Left cardiac atrium (tissue), 4 donors: ENCODE measurements at regions of chr5 and their contacts with region 1.

Region 1: DNA sequence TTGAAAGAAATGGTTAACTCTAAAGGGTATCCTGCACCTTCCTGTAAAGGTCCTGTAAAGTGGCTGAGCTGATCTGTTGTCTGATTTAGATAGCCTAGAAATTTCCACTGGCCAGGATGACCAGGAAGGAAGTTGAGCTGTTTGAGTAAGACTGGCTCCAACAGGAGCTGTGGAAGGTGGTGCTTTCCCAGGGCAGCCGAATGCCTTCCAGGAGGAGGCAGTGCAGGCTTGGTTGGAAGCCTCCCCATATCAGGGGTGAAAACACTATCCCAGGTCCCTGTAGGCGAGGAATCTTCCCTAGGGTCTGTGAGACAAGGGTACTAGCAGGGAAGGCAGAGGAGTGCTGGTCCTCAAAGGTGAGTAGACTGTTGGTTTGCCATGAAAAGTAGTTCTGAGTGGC is 98.4 kb downstream of the LIX1 start:
- DNase-seq: peak; percentile 30
- ATAC-seq: peak; percentile 77 to 80

Region 2: DNA sequence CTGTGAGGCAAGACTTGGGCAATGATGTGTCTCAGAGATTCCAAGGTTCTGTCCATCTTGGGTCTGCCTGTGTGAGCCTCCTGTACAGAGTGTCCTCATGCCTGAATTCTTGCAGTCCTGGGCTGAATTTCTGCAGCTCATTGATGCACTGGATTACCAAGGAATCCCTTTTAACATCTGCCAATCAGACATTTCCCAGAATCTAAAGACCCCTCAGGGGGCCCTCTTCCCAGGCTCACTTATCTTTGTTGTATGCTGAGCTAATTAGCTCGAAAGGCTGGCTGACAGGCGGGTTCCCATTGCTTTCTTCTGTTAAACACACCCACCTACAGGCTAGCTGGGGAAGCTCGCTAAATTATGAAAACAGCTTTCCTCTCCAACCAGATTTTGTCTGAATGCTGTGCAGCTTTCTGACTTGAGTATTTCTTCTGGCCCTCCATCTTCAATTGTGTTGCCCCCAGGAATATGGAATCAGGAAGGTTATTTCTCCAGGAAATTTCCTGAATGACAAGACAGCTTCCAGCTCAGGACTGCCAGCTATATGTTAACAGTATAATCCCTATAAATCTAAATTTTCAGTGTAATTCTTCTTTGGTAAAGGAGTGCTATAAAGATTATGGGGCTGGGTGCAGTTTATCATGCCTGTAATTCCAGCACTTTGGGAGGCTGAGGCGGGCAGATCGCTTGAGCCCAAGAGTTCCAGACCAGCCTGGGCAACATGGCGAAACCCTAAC is 98.6 kb after region 1 on chr5 and contains the start of gene LIX1:
- intact Hi-C with region 1: loop called (anchors 2 to 5 kb)
- DNase-seq: no peak
- ATAC-seq: peak; percentile 72 to 83
- total RNA-seq, gene LIX1: 0.15 to 0.16 TPM

Region 3: DNA sequence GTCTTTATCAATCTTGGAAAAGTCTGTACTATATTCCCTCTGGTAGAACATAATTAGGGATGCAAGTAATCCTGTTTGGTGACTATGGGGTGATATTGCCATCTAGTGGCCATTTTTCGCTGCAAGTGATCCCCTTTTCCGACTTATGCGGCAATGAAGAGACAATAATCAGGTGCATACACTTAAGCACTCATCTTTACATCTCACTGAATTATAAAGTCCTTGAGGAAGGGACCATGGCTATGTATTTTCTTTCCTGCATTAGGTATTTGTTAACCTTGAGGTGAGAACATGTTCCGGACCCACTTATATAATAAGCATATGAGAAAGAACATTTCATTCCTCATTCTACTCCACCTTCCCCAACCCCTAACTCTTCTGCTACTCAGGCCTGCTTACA is 118.0 kb after region 1 on chr5:
- intact Hi-C with region 1: loop called in 1 of 2 experiments (anchors 5 kb)
- DNase-seq: no peak
- ATAC-seq: peak; percentile 57 to 67

Region 4: GRCh38 chr5:97364731-97365130 is 320.7 kb after region 1 on chr5:
- intact Hi-C with region 1: no loop called
- DNase-seq: no peak
- ATAC-seq: no peak